ENCODE measurements at regions of chr4 and their contacts with region 1.

Region 1: DNA sequence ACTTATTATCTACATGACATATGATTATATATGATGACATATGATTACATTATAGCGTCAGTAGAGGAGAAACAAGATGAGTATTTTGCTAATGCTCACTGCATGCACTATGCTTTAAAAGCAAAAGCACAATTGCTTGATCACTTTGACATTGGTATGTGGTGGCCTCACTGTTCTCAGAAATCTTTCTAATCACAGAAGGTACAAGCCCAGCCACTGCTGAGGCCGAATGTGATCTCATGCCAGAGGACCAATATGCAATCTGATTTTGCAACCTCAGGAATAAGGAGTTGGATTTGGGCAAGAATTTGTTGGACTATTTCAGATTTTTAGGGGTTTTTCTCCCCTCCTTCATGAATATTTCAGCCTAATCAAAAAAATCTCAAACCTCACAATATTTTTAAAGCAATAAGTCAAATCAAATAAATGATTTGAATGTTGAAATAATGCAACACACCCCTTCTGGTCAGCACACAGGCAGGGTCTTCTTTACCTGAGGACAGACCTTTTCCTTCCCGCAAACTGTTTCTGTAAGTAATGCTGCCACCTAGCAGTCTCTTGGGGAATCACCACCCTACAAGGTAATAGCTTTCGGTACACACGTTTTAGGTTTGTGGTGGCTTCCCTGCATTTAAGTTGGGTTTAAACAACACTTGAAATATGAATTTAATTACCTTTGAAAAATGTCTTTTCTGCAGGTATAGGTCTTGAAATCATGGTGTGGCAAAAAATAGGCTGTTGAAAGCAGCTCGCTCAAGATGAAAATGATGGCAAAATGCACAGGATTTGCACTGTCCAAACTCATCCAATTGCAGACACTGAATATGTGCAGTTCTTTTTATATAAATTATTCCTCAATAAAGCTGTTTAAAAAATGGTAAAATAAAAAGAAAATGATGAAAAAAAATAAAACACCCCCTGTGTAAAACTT is 4.8 kb upstream of the CXCL13 start:
- DNase-seq: peak; percentile 60
- ATAC-seq: peak; percentile 64
- H3K4me3 Mint-ChIP-seq: no peak overlapping the region
- H3K27ac Mint-ChIP-seq: no peak overlapping the region
- H3K4me1 Mint-ChIP-seq: peaks cover 4% of the 10 kb centered on the region
- H3K27me3 Mint-ChIP-seq: peaks cover 28% of the 10 kb centered on the region
- CTCF ChIP-seq: peak; percentile 96

Region 2: GRCh38 chr4:77209936-77210335 is 390.9 kb before region 1 on chr4:
- CTCF ChIA-PET with region 1: no interaction called
- POLR2A ChIA-PET with region 1: no interaction called
- intact Hi-C with region 1: no loop called
- DNase-seq: no peak
- ATAC-seq: no peak
- H3K4me3 Mint-ChIP-seq: no peak overlapping the region
- H3K27ac Mint-ChIP-seq: no peak overlapping the region
- H3K4me1 Mint-ChIP-seq: no peaks in the 10 kb centered on the region
- H3K27me3 Mint-ChIP-seq: no peaks in the 10 kb centered on the region
- CTCF ChIP-seq: no peak

Region 3: GRCh38 chr4:77367638-77368037 is 233.1 kb before region 1 on chr4:
- CTCF ChIA-PET with region 1: interaction called, 10 read pairs
- POLR2A ChIA-PET with region 1: no interaction called
- intact Hi-C with region 1: no loop called
- DNase-seq: no peak
- ATAC-seq: no peak
- H3K4me3 Mint-ChIP-seq: no peak overlapping the region
- H3K27ac Mint-ChIP-seq: no peak overlapping the region
- H3K4me1 Mint-ChIP-seq: no peaks in the 10 kb centered on the region
- H3K27me3 Mint-ChIP-seq: peaks cover 6% of the 10 kb centered on the region
- CTCF ChIP-seq: no peak

Region 4: GRCh38 chr4:77418333-77419038 is 182.3 kb before region 1 on chr4:
- CTCF ChIA-PET with region 1: interaction called, 14 read pairs
- POLR2A ChIA-PET with region 1: no interaction called
- intact Hi-C with region 1: no loop called
- DNase-seq: peak; percentile 24
- ATAC-seq: peak; percentile 68
- H3K4me3 Mint-ChIP-seq: no peak overlapping the region
- H3K27ac Mint-ChIP-seq: no peak overlapping the region
- H3K4me1 Mint-ChIP-seq: no peaks in the 10 kb centered on the region
- H3K27me3 Mint-ChIP-seq: peaks cover 7% of the 10 kb centered on the region
- CTCF ChIP-seq: peak; percentile 15

Region 5: GRCh38 chr4:77465271-77465670 is 135.5 kb before region 1 on chr4:
- CTCF ChIA-PET with region 1: interaction called, 79 read pairs
- POLR2A ChIA-PET with region 1: interaction called, 3 read pairs
- intact Hi-C with region 1: loop called (anchors 5 kb)
- DNase-seq: peak; percentile 52
- ATAC-seq: peak; percentile 49
- H3K4me3 Mint-ChIP-seq: no peak overlapping the region
- H3K27ac Mint-ChIP-seq: no peak overlapping the region
- H3K4me1 Mint-ChIP-seq: no peaks in the 10 kb centered on the region
- H3K27me3 Mint-ChIP-seq: peaks cover 6% of the 10 kb centered on the region
- CTCF ChIP-seq: peak; percentile 52

Region 6: DNA sequence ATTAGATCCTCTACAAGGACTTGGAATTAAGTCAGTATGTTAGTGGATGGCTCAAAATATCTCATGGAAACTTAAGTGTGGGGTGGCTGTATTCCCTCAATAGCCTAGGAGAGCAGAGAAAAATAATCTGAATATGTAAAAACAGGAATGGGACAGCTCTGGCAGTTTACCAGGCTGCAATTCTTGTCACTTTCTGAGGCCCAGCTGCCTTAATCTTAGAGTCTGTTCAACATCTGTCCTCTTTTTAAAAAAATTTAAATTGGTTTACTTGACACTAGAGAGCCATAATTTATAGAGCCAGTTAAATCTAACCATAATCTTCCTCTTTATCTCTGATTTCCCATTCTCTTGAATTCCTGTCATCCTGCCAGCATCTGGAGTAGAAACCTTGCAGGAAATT is 104.3 kb before region 1 on chr4:
- CTCF ChIA-PET with region 1: interaction called, 14 read pairs
- POLR2A ChIA-PET with region 1: no interaction called
- intact Hi-C with region 1: no loop called
- DNase-seq: no peak
- ATAC-seq: no peak
- H3K4me3 Mint-ChIP-seq: no peak overlapping the region
- H3K27ac Mint-ChIP-seq: no peak overlapping the region
- H3K4me1 Mint-ChIP-seq: no peaks in the 10 kb centered on the region
- H3K27me3 Mint-ChIP-seq: peaks cover 18% of the 10 kb centered on the region
- CTCF ChIP-seq: no peak

Region 7: DNA sequence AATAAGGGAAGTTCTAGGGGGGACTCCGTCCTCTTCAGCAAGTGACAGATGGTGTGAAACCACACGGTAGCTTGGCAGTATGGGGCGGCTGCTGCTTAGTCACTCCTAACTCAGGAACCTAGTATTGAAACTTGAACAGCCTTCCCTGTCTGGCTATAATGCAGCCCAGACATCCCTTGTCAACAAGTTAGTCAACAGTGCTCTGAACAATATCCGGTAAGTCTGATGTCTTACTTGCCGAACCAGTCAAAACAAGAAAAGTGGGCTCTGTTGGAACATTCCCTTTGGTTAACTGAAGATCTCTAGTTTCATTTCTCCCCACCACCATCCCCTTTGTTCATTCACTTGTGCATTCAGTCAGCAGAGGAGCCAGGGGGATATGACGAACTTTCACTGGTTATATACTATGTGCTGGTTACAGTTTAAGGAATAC is 13.8 kb before region 1 on chr4:
- CTCF ChIA-PET with region 1: interaction called, 25 read pairs
- POLR2A ChIA-PET with region 1: no interaction called
- intact Hi-C with region 1: no loop called
- DNase-seq: peak; percentile 90
- ATAC-seq: peak; percentile 98
- H3K4me3 Mint-ChIP-seq: peak overlapping the region; percentile 21
- H3K27ac Mint-ChIP-seq: peak overlapping the region; percentile 73
- H3K4me1 Mint-ChIP-seq: peaks cover 50% of the 10 kb centered on the region
- H3K27me3 Mint-ChIP-seq: peaks cover 14% of the 10 kb centered on the region
- CTCF ChIP-seq: no peak

Measured in activated CD8-positive, alpha-beta T cell treated with anti-CD3 and anti-CD28 coated beads for 36 hours (primary cell).